Activated CD8-positive, alpha-beta T cell treated with anti-CD3 and anti-CD28 coated beads for 36 hours (primary cell): ENCODE measurements at regions of chr17 and their contacts with region 1.

Region 1: GRCh38 chr17:74212913-74213791 is at the start of gene TTYH2:
- DNase-seq: peak; percentile 65
- ATAC-seq: peak; percentile 61
- H3K4me3 Mint-ChIP-seq: peak within 1 kb of the TSS; percentile 74
- H3K27ac Mint-ChIP-seq: peak within 1 kb of the TSS; percentile 57
- H3K4me1 Mint-ChIP-seq: peaks cover 66% of the 10 kb centered on the region
- H3K27me3 Mint-ChIP-seq: no peaks in the 10 kb centered on the region
- CTCF ChIP-seq: peak; percentile 45
- total RNA-seq, gene TTYH2: 3.4 to 4.9 TPM

Region 2: GRCh38 chr17:74280093-74280513 is 67.0 kb after region 1 on chr17:
- CTCF ChIA-PET with region 1: interaction called, 4 read pairs
- POLR2A ChIA-PET with region 1: interaction called, 5 read pairs
- intact Hi-C with region 1: loop called (anchors 5 kb)
- DNase-seq: peak; percentile 82
- ATAC-seq: peak; percentile 71
- H3K4me3 Mint-ChIP-seq: no peak overlapping the region
- H3K27ac Mint-ChIP-seq: peak overlapping the region; percentile 85
- H3K4me1 Mint-ChIP-seq: peaks cover 34% of the 10 kb centered on the region
- H3K27me3 Mint-ChIP-seq: no peaks in the 10 kb centered on the region
- CTCF ChIP-seq: no peak